IMR-90 (cell line): ENCODE measurements at regions of chr1 and their contacts with region 1.

Region 1: GRCh38 chr1:202599677-202600431 is 110.4 kb downstream of the SYT2 start:
- DNase-seq: peak; percentile 84
- ATAC-seq: peak; percentile 100
- H3K4me3 ChIP-seq: no peak overlapping the region
- H3K27ac ChIP-seq: peak overlapping the region; percentile 56; the same call in 1 of the 2 replicates
- H3K4me1 ChIP-seq: peaks cover 6% of the 10 kb centered on the region; the same call in 1 of the 2 replicates
- H3K27me3 ChIP-seq: no peaks in the 10 kb centered on the region
- CTCF ChIP-seq: peak; percentile 95
- POLR2A ChIP-seq: no peak
- RAD21 ChIP-seq: peak; percentile 96

Region 2: GRCh38 chr1:202462342-202463076 is 137.3 kb before region 1 on chr1:
- CTCF ChIA-PET with region 1: no interaction called
- POLR2A ChIA-PET with region 1: no interaction called
- dilution Hi-C with region 1: no loop called
- in situ Hi-C with region 1: no loop called
- intact Hi-C with region 1: loop called (anchors 5 kb)
- DNase-seq: no peak
- ATAC-seq: no peak
- H3K4me3 ChIP-seq: no peak overlapping the region
- H3K27ac ChIP-seq: no peak overlapping the region
- H3K4me1 ChIP-seq: peaks cover 5% of the 10 kb centered on the region
- H3K27me3 ChIP-seq: no peaks in the 10 kb centered on the region
- CTCF ChIP-seq: no peak
- POLR2A ChIP-seq: no peak
- RAD21 ChIP-seq: no peak

Region 3: GRCh38 chr1:202579806-202580205 is 20.0 kb before region 1 on chr1:
- CTCF ChIA-PET with region 1: interaction called, 15 read pairs
- POLR2A ChIA-PET with region 1: no interaction called
- dilution Hi-C with region 1: no loop called
- in situ Hi-C with region 1: no loop called
- intact Hi-C with region 1: no loop called
- DNase-seq: peak; percentile 96
- ATAC-seq: peak; percentile 44
- H3K4me3 ChIP-seq: no peak overlapping the region
- H3K27ac ChIP-seq: peak overlapping the region; percentile 89; the same call in 1 of the 2 replicates
- H3K4me1 ChIP-seq: peaks cover 40% of the 10 kb centered on the region
- H3K27me3 ChIP-seq: no peaks in the 10 kb centered on the region
- CTCF ChIP-seq: no peak
- POLR2A ChIP-seq: no peak; the same call in 1 of the 2 replicates
- RAD21 ChIP-seq: no peak